Psoas muscle (tissue), 8 donors: ENCODE measurements at regions of chr20 and their contacts with region 1.

Region 1: DNA sequence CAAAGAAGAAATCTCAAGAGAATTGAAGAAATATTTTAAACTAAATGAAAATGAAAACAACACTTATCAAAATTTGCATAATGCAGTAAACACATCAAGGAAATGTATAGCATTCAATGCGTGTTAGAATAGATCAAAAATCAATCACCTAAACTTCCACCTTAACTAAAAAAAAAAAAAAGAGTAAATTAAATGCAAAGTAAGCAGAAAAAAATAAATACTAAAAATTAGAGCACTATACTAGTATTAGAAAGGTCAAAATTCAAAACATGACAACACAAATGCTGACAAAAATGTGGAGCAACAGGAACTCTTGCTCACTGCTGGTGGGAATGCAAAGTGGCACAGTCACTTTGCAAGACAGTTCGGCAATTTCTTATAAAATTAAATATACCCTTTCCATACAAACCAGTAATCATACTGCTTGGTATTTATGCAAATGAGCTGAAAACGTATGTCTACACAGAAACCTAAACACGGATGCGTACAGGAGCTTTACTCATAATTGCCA is 103.8 kb downstream of the KIF16B start:
- DNase-seq: no peak
- ATAC-seq: no peak
- H3K4me3 ChIP-seq: no peak overlapping the region
- H3K27ac ChIP-seq: no peak overlapping the region
- H3K4me1 ChIP-seq: peaks cover 8% of the 10 kb centered on the region
- H3K27me3 ChIP-seq: no peaks in the 10 kb centered on the region
- CTCF ChIP-seq: no peak

Region 2: GRCh38 chr20:18304585-18304984 is 1835.1 kb after region 1 on chr20:
- intact Hi-C with region 1: loop called in 1 of 2 experiments (anchors 5 kb)
- DNase-seq: no peak
- ATAC-seq: no peak
- H3K4me3 ChIP-seq: no peak overlapping the region
- H3K27ac ChIP-seq: no peak overlapping the region
- H3K4me1 ChIP-seq: no peaks in the 10 kb centered on the region
- H3K27me3 ChIP-seq: no peaks in the 10 kb centered on the region
- CTCF ChIP-seq: no peak